ENCODE measurements at regions of chr9 and their contacts with region 1.

Region 1: GRCh38 chr9:87479801-87480201 is 17.9 kb upstream of the DAPK1 start:
- DNase-seq: peak in 2 of 3 donors; percentile 30 to 58
- ATAC-seq: peak; percentile 41 to 50
- H3K4me3 ChIP-seq: no peak overlapping the region
- H3K27ac ChIP-seq: no peak overlapping the region
- H3K4me1 ChIP-seq: no peaks in the 10 kb centered on the region
- H3K27me3 ChIP-seq: no peaks in the 10 kb centered on the region

Region 2: GRCh38 chr9:87359958-87360601 is 119.7 kb before region 1 on chr9:
- intact Hi-C with region 1: loop called in 1 of 4 experiments (anchors 10 kb)
- DNase-seq: no peak
- ATAC-seq: no peak
- H3K4me3 ChIP-seq: no peak overlapping the region
- H3K27ac ChIP-seq: no peak overlapping the region
- H3K4me1 ChIP-seq: no peaks in the 10 kb centered on the region
- H3K27me3 ChIP-seq: no peaks in the 10 kb centered on the region

Region 3: DNA sequence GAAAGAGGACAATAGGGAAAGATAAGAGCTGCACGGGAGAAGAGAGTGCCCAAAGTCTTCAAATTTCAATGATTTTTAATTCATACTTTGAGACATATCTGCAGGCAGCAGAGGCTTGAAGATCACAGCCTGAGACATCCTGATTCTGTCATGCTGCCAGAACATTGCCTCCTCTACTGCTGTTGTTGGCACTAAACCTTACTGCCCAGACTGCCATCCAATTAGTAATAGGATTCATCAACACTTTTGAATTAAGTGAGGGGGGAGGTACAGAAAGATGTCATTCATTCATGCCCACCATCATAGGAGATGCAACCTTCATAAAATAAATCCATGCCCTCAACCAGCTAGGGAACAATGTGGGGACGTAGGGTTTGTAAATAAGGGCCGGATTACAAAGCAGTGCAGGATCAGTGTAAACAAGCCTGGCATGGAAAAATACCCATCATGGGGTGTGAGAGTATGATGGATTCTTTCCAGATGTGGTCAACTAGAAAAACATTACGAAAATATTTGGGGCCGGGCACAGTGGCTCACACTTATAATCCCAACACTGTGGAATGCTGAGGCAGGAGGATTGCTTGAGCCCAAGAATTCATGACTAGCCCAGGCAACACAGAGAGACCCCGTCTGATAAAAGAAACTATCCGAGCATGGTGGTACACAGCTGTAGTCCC is 104.3 kb before region 1 on chr9:
- intact Hi-C with region 1: no loop called
- DNase-seq: no peak
- ATAC-seq: no peak
- H3K4me3 ChIP-seq: no peak overlapping the region
- H3K27ac ChIP-seq: no peak overlapping the region
- H3K4me1 ChIP-seq: no peaks in the 10 kb centered on the region
- H3K27me3 ChIP-seq: no peaks in the 10 kb centered on the region

Region 4: GRCh38 chr9:88303721-88304451 is 824.1 kb after region 1 on chr9:
- intact Hi-C with region 1: no loop called
- DNase-seq: no peak
- ATAC-seq: no peak
- H3K4me3 ChIP-seq: no peak overlapping the region
- H3K27ac ChIP-seq: no peak overlapping the region
- H3K4me1 ChIP-seq: no peaks in the 10 kb centered on the region
- H3K27me3 ChIP-seq: no peaks in the 10 kb centered on the region